ENCODE measurements at regions of chr1 and their contacts with region 1.

Region 1: DNA sequence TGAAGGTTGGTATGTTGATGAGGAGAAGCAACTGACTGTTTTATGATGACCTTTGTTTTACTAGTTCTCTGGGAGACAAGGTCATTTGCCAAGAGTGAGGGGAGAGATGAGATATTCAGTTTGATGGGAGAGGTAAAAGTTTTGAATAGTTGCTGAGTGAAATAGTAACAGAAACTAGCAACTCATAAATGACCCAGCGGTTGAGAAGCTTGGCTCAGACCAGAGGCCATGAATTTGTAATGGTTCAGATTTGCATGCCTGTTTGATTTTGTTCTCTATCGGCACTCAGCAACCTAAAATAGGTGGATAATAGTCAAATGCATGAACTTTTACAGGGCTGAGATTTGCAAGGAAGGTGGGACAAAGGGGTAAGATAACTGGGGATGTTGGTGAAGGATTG is 6.6 kb downstream of the CCDC30 start:
- DNase-seq: no peak
- ATAC-seq: no peak
- H3K4me3 ChIP-seq: no peak overlapping the region
- H3K27ac ChIP-seq: no peak overlapping the region
- H3K4me1 ChIP-seq: no peaks in the 10 kb centered on the region
- H3K27me3 ChIP-seq: no peaks in the 10 kb centered on the region
- CTCF ChIP-seq: no peak

Region 2: GRCh38 chr1:42240966-42241755 is 228.6 kb before region 1 on chr1:
- CTCF ChIA-PET with region 1: no interaction called
- POLR2A ChIA-PET with region 1: interaction called, 11 read pairs
- in situ Hi-C with region 1: no loop called
- intact Hi-C with region 1: no loop called
- DNase-seq: no peak
- ATAC-seq: no peak
- H3K4me3 ChIP-seq: no peak overlapping the region
- H3K27ac ChIP-seq: no peak overlapping the region
- H3K4me1 ChIP-seq: no peaks in the 10 kb centered on the region
- H3K27me3 ChIP-seq: no peaks in the 10 kb centered on the region
- CTCF ChIP-seq: no peak